H1 (cell line): ENCODE measurements at regions of chr6 and their contacts with region 1.

Region 1: GRCh38 chr6:3162565-3163247 is 5.4 kb upstream of the TUBB2A start:
- DNase-seq: peak in 1 of 2 experiments; percentile 85
- H3K4me3 ChIP-seq: peak overlapping the region; percentile 42 to 83 (median 72)
- H3K27ac ChIP-seq: peak overlapping the region; percentile 50; the same call in 1 of the 2 replicates
- H3K4me1 ChIP-seq: peaks cover 14 to 48% (median 41%) of the 10 kb centered on the region in 4 experiments
- H3K27me3 ChIP-seq: no peaks in the 10 kb centered on the region
- CTCF ChIP-seq: peak in 1 of 3 experiments; percentile 9; a peak in 2 of 4 replicates
- EP300 ChIP-seq: no peak
- POLR2A ChIP-seq: 0 out of 3 replicates have a peak, but pooled peaks of 1 of the 2 experiments have one; percentile 38
- RAD21 ChIP-seq: 0 out of 4 replicates have a peak, but pooled peaks of 1 of the 2 experiments have one; percentile 5

Region 2: GRCh38 chr6:2956930-2957685 is 205.6 kb before region 1 on chr6:
- CTCF ChIA-PET with region 1: no interaction called
- POLR2A ChIA-PET with region 1: no interaction called
- DNase-seq: no peak
- H3K4me3 ChIP-seq: no peak overlapping the region
- H3K27ac ChIP-seq: no peak overlapping the region
- H3K4me1 ChIP-seq: peaks cover 14 to 23% (median 20%) of the 10 kb centered on the region in 4 experiments
- H3K27me3 ChIP-seq: no peaks in the 10 kb centered on the region
- CTCF ChIP-seq: no peak
- EP300 ChIP-seq: no peak
- POLR2A ChIP-seq: no peak
- RAD21 ChIP-seq: no peak

Region 3: DNA sequence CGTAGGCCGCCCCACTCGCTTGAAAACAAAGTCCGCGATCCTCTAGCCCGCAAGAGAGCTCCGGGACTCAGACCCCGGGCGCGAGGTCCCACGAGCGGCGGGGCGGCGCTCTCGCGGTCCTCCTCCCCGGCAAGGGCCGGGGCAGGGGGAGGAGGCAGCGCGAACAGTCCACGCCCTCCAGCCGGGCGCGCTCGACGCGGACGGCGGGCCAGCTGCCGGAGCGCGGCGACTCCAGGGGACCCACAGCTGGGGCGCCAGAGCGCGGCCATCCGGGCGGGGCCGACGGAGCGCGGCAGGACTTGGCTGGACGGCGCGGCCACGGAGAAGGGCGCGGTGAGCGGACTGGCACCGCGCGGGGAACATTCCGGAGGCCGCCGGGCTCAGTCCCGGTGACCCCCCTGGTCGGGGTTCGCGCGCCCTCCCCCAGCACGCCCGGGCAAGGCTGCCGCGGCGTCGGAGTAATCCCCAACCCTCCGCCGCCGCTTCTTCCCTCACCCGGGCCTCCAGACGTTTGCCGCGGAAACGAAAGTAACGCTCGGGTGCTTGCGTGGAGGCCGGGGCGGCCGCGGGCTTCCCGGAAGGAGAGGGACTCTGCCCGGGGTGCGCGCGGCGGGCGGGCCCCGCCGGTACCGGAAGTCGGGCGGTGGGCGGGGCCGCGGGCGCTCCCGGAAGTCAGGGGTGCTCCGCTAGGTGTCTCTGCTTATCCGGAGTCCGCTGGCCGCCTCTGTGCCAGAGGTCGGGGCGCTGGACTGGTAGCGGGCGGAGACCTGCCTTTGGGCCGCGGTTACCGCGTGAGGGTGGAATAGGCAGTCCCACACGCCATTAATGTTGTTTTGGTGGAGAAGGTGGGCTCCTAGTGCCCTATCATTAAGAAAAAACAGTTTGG is 94.1 kb before region 1 on chr6 and contains the start of gene RIPK1:
- CTCF ChIA-PET with region 1: no interaction called
- POLR2A ChIA-PET with region 1: no interaction called
- DNase-seq: peak in 1 of 2 experiments; percentile 91
- H3K4me3 ChIP-seq: peak within 1 kb of the TSS; percentile 72 to 88 (median 74)
- H3K27ac ChIP-seq: peak within 1 kb of the TSS; percentile 81; the same call in 1 of the 2 replicates
- H3K4me1 ChIP-seq: peaks cover 4 to 9% (median 6%) of the 10 kb centered on the region in 4 experiments; a peak in 5 of 7 replicates
- H3K27me3 ChIP-seq: no peaks in the 10 kb centered on the region
- CTCF ChIP-seq: peak in 2 of 3 experiments; percentile 29; a peak in 1 of 4 replicates
- EP300 ChIP-seq: no peak
- POLR2A ChIP-seq: peak; percentile 63 to 78
- RAD21 ChIP-seq: peak; percentile 26; a peak in 3 of 4 replicates
- total RNA-seq, gene RIPK1: 20.7 and 22.9 TPM in 2 replicates

Region 4: DNA sequence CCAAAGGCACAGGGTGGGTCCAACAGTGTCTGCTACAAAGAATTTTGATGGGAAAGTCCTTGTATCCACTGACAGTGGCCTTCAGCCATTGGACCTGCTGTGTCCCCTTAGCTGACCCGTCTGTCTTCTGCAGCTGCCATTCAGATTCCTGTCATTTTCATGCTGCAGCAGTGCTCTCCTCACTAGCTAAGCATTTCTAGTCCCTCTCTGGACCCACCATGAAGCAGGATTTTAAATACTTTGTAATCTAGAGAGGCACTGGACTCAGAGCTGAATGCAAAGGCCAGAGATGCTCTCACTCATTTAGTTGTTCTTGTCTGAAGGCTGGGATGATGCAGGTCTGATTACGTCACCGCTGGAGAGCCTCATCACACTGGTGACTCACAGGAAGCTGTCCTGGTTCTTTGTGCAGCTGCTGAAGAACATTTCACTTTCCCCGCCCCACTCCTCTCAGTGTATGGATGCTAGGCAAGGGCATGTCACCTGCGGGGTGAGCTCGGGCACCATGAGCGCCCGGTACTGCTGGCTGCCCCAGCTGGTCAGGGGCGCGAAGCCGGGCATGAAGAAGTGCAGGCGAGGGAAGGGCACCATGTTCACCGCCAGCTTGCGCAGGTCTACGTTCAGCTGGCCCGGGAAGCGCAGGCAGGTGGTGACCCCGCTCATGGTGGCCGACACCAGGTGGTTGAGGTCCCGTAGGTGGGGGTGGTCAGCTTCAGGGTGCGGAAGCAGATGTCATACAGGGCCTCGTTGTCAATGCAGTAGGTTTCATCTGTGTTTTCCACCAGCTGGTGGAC is 14.1 kb after region 1 on chr6:
- CTCF ChIA-PET with region 1: interaction called, 13 read pairs
- POLR2A ChIA-PET with region 1: interaction called, 17 read pairs
- DNase-seq: no peak
- H3K4me3 ChIP-seq: no peak overlapping the region
- H3K27ac ChIP-seq: no peak overlapping the region
- H3K4me1 ChIP-seq: peaks cover 0 to 3% (median 0%) of the 10 kb centered on the region in 4 experiments; a peak in 1 of 7 replicates
- H3K27me3 ChIP-seq: no peaks in the 10 kb centered on the region
- CTCF ChIP-seq: no peak
- EP300 ChIP-seq: no peak
- POLR2A ChIP-seq: no peak
- RAD21 ChIP-seq: no peak

Region 5: GRCh38 chr6:3194535-3195419 is 32.1 kb after region 1 on chr6:
- CTCF ChIA-PET with region 1: interaction called, 17 read pairs
- POLR2A ChIA-PET with region 1: interaction called, 17 read pairs
- DNase-seq: peak in 1 of 2 experiments; percentile 62
- H3K4me3 ChIP-seq: peak overlapping the region in 1 of 4 experiments; percentile 28; a peak in 1 of 8 replicates
- H3K27ac ChIP-seq: peak overlapping the region; percentile 68
- H3K4me1 ChIP-seq: peaks cover 15 to 24% (median 20%) of the 10 kb centered on the region in 4 experiments
- H3K27me3 ChIP-seq: no peaks in the 10 kb centered on the region
- CTCF ChIP-seq: no peak
- EP300 ChIP-seq: no peak
- POLR2A ChIP-seq: no peak
- RAD21 ChIP-seq: no peak

Region 6: DNA sequence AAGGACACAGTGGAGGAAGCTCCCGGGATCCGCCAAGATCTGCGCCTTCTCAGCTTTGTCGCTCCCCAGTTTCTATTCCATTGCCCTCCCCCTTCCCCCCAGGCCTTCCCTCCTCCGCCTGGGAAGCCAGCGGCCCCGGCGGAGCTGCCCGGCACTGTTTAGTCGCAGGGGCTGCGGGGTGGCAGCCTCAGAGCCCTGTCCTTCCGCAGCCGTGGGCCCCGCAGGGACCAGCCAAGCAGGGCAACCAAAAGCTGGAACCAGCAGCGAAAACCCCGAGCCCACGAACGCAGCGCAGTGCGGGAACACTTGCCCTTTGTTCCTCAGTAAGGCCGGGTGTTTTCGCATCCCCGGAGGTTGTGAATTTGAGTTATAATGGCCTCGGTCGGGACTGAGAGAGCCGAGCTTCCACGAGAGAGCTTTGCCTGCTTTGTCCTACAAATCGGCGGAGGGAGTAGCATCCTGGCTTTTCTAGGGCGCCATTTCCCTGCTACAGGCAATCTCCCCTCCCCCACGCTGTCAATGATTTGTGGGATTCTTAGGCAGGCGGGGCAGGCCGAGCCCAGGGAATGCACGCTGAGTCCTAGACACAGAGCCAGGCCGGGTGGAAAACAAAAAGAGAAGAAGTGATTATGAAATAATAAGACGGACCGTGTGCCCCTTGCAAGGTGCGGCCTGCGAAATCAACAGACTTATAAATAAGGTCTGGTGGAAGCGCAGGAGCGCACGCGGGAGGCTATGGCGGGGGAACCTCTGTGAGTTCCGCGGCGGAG is 68.7 kb after region 1 on chr6:
- CTCF ChIA-PET with region 1: interaction called, 10 read pairs
- POLR2A ChIA-PET with region 1: interaction called, 58 read pairs
- DNase-seq: peak in 1 of 2 experiments; percentile 83
- H3K4me3 ChIP-seq: peak overlapping the region; percentile 71 to 99 (median 86)
- H3K27ac ChIP-seq: no peak overlapping the region; the same call in 1 of the 2 replicates
- H3K4me1 ChIP-seq: peaks cover 5 to 17% (median 11%) of the 10 kb centered on the region in 4 experiments; a peak in 6 of 7 replicates
- H3K27me3 ChIP-seq: peaks cover 0 to 23% (median 19%) of the 10 kb centered on the region in 4 experiments; a peak in 6 of 7 replicates
- CTCF ChIP-seq: no peak
- EP300 ChIP-seq: peak in 1 of 2 experiments; percentile 28; a peak in 1 of 3 replicates
- POLR2A ChIP-seq: peak in 1 of 2 experiments; percentile 47; a peak in 1 of 3 replicates
- RAD21 ChIP-seq: no peak